Cardiac septum (tissue), 1 donor: ENCODE measurements at regions of chr10 and their contacts with region 1.

Region 1: GRCh38 chr10:100562008-100562711 is 26.4 kb downstream of the HIF1AN start:
- DNase-seq: peak; percentile 82

Region 2: DNA sequence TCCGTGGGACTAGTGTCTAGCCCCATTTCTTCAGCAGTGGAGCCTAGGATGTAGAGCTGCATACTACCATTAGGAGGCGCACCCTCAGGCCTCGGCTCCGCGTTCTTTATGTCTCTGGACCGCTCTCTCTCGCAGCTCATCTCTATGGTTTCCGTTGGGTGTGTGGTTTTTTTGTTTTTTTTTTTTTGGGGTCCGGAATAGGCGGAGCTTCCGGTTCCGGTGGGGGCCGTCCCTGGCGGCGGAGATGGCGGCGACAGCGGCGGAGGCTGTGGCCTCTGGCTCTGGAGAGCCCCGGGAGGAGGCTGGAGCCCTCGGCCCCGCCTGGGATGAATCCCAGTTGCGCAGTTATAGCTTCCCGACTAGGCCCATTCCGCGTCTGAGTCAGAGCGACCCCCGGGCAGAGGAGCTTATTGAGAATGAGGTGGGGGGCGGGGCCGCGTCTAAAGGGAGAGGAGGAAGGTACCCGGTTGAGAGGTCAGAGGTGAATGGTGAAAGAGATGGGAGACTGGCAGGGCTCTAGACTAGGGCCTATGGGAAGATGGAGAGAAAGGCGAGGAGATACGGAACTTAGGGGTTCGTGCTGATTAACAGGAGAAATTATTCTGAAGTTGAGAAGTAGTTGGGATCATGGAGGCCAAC is 26.3 kb before region 1 on chr10 and contains the start of gene HIF1AN:
- intact Hi-C with region 1: no loop called
- DNase-seq: peak; percentile 93
- total RNA-seq, gene HIF1AN: 53.7 TPM

Region 3: DNA sequence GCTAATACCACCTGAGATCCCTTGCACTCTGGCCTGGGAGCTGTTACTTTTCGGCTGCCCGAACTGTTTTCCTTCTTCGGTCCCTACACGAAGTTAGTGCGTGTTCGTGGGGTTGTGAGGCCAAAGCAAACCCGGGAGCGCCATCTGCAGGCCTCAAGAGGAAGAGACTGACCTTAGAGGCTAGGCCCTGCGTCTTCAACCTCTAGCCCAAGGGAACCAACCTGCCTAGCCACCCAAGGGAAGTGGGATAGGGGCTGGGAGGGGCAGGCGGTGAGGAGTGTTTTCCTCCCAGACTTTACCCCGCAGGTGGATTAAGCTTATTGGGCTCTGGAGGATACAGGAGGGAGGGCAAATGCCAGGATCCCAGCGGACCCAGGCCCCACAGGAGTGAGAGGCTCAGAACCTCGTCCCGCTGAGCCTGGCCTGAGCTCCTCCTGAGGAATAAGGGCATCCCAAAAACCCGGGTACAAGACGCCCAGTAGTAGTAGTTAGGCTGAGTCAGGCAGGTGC is 181.5 kb after region 1 on chr10:
- intact Hi-C with region 1: loop called (anchors 10 kb)
- DNase-seq: no peak